Psoas muscle (tissue), 8 donors: ENCODE measurements at regions of chr11 and their contacts with region 1.

Region 1: GRCh38 chr11:60363542-60364510 is 14.5 kb upstream of the MS4A7 start:
- DNase-seq: no peak
- ATAC-seq: peak in 2 of 4 donors; percentile 30
- H3K4me3 ChIP-seq: no peak overlapping the region
- H3K27ac ChIP-seq: no peak overlapping the region
- H3K4me1 ChIP-seq: no peaks in the 10 kb centered on the region
- H3K27me3 ChIP-seq: no peaks in the 10 kb centered on the region
- CTCF ChIP-seq: peak; percentile 51

Region 2: GRCh38 chr11:60615497-60615896 is 251.7 kb after region 1 on chr11:
- intact Hi-C with region 1: loop called in 1 of 2 experiments (anchors 5 kb)
- DNase-seq: no peak
- ATAC-seq: no peak
- H3K4me3 ChIP-seq: no peak overlapping the region
- H3K27ac ChIP-seq: no peak overlapping the region
- H3K4me1 ChIP-seq: no peaks in the 10 kb centered on the region
- H3K27me3 ChIP-seq: no peaks in the 10 kb centered on the region
- CTCF ChIP-seq: no peak